ENCODE measurements at regions of chr16 and their contacts with region 1.

Region 1: GRCh38 chr16:19067349-19068236 is at the start of gene COQ7:
- DNase-seq: peak; percentile 98
- H3K4me3 ChIP-seq: peak within 1 kb of the TSS; percentile 88
- H3K27ac ChIP-seq: peak within 1 kb of the TSS; percentile 97
- H3K4me1 ChIP-seq: peaks cover 9% of the 10 kb centered on the region; the same call in 1 of the 2 replicates
- H3K27me3 ChIP-seq: no peaks in the 10 kb centered on the region
- CTCF ChIP-seq: 0 out of 2 replicates have a peak, but pooled peaks have one; percentile 25
- total RNA-seq, gene COQ7: 26.9 and 30.7 TPM in 2 replicates

Region 2: GRCh38 chr16:18801197-18801972 is 266.2 kb before region 1 on chr16 and contains the start of gene ARL6IP1:
- CTCF ChIA-PET with region 1: no interaction called
- POLR2A ChIA-PET with region 1: no interaction called
- intact Hi-C with region 1: loop called (anchors 5 kb)
- DNase-seq: peak; percentile 98 to 99
- H3K4me3 ChIP-seq: peak within 1 kb of the TSS; percentile 98
- H3K27ac ChIP-seq: peak within 1 kb of the TSS; percentile 85
- H3K4me1 ChIP-seq: peaks cover 48% of the 10 kb centered on the region
- H3K27me3 ChIP-seq: no peaks in the 10 kb centered on the region
- CTCF ChIP-seq: peak; percentile 91
- total RNA-seq, gene ARL6IP1: 294 and 338 TPM in 2 replicates

Region 3: DNA sequence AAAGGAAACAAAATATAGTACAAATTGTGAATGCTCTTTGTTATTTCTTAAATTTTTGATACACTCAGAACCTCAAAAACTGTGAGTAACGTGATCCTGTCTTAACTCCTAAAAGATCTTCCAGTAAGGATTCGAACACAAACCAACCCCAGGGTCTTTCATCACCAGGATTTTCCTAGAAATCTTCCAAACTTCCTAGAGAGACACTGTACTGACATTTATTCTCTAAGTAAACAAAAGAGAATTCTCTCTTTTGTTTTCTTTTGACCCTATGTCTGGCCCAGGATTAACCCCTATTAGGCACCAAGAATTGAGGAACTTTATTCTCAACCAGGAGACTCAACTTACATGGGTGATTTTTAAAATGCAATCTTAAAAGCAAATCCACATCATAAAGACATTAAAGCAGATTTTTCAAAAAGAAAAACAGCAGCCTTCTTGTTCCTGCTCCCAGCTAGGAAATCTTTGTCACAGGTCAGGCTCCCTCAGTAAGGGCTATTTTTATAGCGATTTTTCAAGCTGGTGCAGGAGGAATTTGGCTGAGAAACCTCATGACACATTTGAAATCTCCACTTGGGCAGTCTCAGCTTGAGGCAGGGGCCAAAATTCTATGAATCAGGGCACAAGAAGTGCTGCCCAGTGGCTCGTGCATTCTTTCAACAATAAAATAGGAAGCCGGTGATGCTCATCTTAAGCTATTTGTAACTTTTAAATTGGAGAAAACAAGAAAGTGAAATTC is 135.2 kb before region 1 on chr16:
- CTCF ChIA-PET with region 1: no interaction called
- POLR2A ChIA-PET with region 1: no interaction called
- intact Hi-C with region 1: loop called (anchors 2 kb)
- DNase-seq: no peak
- H3K4me3 ChIP-seq: no peak overlapping the region
- H3K27ac ChIP-seq: no peak overlapping the region
- H3K4me1 ChIP-seq: peaks cover 6% of the 10 kb centered on the region; the same call in 1 of the 2 replicates
- H3K27me3 ChIP-seq: no peaks in the 10 kb centered on the region
- CTCF ChIP-seq: no peak

Region 4: DNA sequence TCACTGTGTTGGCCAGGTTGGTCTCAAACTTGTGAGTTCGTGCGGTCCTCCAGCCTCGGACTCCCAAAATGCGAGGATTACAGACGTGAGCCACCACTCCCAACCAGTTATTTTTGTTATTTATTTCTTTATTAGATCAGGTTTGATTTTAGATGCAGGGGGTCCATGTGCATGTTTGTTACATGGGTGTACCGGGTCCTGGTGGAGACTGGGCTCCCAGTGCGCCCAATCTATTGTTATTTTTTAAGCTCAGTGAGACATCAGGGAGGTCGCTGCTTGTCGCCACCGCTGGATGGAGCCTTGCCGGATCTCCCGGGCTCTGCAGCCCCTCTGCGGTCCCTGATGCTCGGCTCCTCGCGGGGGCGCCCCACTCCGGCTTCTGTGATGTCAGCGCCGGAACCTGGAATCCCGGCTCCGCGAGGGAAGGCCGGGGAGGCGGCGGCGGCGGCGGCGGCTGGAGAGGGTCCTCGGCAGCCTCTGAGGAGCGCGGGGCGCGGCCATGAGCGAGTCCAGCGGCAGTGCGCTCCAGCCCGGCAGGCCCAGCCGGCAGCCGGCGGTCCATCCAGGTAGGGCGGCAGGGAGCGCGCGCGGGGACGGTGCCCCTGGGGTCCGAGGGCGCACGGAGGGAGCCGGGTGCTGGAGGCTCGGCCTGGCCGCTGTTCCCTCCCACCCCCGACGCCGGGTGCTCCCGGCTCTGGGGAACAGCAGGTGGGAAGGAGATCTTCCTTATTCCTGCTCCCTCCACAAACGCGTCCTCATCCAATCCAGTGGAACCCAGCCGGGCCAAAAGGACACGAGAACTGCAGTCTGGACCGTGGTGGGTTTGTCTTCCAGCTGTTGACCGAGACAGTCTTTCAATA is 83.8 kb before region 1 on chr16 and contains the start of gene TMC7:
- CTCF ChIA-PET with region 1: interaction called, 4 read pairs
- POLR2A ChIA-PET with region 1: no interaction called
- intact Hi-C with region 1: loop called (anchors 1 kb)
- DNase-seq: peak; percentile 70 to 94
- H3K4me3 ChIP-seq: peak within 1 kb of the TSS; percentile 74
- H3K27ac ChIP-seq: no peak within 1 kb of the TSS
- H3K4me1 ChIP-seq: peaks cover 28% of the 10 kb centered on the region
- H3K27me3 ChIP-seq: no peaks in the 10 kb centered on the region
- CTCF ChIP-seq: peak; percentile 79
- total RNA-seq, gene TMC7: 4.3 and 4.4 TPM in 2 replicates

Region 5: GRCh38 chr16:18999045-18999393 is 68.6 kb before region 1 on chr16:
- CTCF ChIA-PET with region 1: no interaction called
- POLR2A ChIA-PET with region 1: interaction called, 3 read pairs
- intact Hi-C with region 1: loop called (anchors 5 kb)
- DNase-seq: no peak
- H3K4me3 ChIP-seq: no peak overlapping the region
- H3K27ac ChIP-seq: peak overlapping the region; percentile 65
- H3K4me1 ChIP-seq: peaks cover 26% of the 10 kb centered on the region
- H3K27me3 ChIP-seq: no peaks in the 10 kb centered on the region
- CTCF ChIP-seq: no peak

Region 6: GRCh38 chr16:19005561-19006445 is 61.8 kb before region 1 on chr16:
- CTCF ChIA-PET with region 1: interaction called, 9 read pairs
- POLR2A ChIA-PET with region 1: interaction called, 3 read pairs
- intact Hi-C with region 1: loop called (anchors 2 kb)
- DNase-seq: peak; percentile 55 to 76
- H3K4me3 ChIP-seq: no peak overlapping the region
- H3K27ac ChIP-seq: peak overlapping the region; percentile 33; the same call in 1 of the 2 replicates
- H3K4me1 ChIP-seq: peaks cover 11% of the 10 kb centered on the region
- H3K27me3 ChIP-seq: no peaks in the 10 kb centered on the region
- CTCF ChIP-seq: no peak

Region 7: DNA sequence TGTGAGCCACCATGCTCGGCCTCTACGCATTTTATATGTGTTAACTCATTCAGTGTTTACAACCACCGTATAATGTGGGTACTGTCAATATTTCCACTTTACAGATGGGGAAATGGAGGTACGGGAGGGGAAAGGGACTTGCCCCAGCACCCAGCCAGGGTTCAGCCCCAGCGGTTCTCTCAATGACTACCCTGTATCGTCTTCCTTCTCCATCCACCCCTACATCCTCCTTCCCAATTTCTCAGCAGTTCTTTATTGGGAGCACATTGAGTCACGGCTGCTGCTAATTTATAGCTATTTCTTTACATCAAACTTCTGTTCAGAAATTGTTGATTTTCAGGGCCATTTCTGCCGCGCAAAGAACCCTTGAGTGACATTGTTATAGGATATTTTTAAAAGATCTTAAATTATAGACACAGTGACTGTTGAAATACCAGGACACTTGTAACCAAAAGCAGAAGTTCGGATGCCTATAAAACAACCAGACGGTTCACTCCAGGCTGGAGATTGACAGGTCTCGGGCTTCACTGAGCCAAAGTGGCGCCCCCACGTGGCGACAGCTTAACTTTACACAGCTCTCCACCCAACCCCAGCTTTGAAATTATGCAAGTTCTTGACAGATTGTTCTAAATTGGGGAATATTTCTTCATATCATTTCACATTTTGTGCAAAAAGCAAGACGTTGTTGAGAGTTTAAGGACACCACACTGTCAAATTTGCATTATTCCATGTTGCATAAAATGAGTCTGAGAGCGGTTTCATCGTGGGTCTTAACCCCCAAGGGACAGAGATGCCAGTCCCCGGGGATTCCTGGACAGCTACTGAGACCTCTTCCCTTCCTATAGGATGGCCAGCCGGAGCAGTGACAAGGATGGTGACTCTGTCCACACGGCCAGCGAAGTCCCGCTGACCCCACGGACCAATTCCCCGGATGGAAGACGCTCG is 112.2 kb after region 1 on chr16:
- CTCF ChIA-PET with region 1: interaction called, 11 read pairs
- POLR2A ChIA-PET with region 1: no interaction called
- intact Hi-C with region 1: no loop called
- DNase-seq: peak; percentile 56 to 63
- H3K4me3 ChIP-seq: no peak overlapping the region
- H3K27ac ChIP-seq: no peak overlapping the region
- H3K4me1 ChIP-seq: peaks cover 31% of the 10 kb centered on the region
- H3K27me3 ChIP-seq: no peaks in the 10 kb centered on the region
- CTCF ChIP-seq: peak; percentile 90

Measured in PC-9 (cell line).